SK-N-SH (cell line): ENCODE measurements at regions of chr1 and their contacts with region 1.

Region 1: DNA sequence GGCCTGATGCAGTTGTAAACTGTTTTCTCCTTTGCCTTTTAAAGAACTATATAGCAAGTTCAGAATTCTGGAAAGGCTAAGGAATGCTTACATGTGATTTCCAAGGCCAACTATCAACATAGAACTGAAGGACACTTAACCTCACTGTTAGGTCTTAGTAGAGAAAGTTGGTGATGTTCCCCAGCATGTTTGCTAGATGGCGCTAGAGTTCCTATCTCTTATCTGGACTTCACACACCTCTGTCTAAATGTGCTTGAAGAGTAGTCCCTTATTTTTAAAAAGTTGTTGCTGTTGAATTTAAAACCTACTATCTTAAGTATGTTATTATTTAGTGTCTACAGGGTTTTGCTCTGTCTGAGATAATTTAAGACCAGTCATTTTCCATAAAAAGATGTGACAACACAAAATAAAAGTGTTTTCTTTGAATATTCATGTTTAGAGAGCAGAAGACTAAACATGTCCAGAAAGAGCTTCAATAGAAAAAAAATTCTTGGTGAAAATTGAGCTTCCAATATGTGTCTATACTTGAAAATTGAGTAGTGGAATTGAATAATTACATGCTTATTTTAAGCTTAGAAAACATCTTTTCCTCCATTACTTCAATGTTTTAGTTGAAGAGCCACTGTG is 237.3 kb downstream of the S1PR1 start:
- DNase-seq: peak; percentile 8
- H3K4me3 ChIP-seq: no peak overlapping the region
- H3K27ac ChIP-seq: no peak overlapping the region
- H3K4me1 ChIP-seq: no peaks in the 10 kb centered on the region
- H3K27me3 ChIP-seq: no peaks in the 10 kb centered on the region
- CTCF ChIP-seq: peak; percentile 57
- EP300 ChIP-seq: no peak
- RAD21 ChIP-seq: peak; percentile 70

Region 2: DNA sequence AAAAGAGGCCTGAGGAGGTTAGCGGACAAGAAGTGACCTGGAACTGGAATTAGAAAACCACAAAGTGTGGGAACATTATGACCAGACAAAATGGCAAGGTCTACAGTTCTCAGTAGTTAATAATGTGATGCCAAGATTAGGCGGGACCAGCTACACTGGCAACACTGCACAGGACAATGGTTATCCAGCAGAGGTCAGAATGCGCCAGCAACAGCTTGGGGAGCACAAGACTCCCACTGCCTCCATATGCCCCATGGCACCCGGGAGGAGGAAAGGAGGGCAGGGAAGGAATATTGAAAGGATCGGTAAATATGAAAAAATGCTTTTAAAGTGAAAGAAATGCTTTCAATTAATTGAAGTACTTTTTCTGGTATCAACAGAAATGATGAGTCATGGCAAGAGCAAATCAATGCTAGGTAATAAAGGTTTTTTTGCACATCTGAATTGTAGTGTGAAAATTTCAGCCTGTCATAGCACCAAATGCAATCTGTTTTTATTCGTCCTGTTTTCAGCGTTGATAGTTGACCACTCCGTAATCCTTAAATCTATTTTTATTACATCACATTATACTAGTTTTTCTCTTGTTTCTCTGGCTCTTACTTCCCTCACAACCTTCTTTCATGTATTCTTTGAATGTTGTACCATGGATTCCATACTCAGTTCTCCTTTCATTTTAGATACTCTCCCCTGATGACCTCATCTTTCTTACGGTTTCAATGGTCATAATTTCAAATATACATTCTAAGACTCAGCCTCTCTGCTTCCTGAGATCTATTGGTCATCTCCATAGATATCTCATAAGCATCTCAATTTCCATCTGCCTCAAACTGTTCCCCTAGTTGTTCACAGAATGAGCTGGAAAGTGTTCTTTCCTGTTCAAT is 723.9 kb before region 1 on chr1:
- CTCF ChIA-PET with region 1: no interaction called
- POLR2A ChIA-PET with region 1: no interaction called
- DNase-seq: no peak
- H3K4me3 ChIP-seq: no peak overlapping the region
- H3K27ac ChIP-seq: no peak overlapping the region
- H3K4me1 ChIP-seq: no peaks in the 10 kb centered on the region
- H3K27me3 ChIP-seq: no peaks in the 10 kb centered on the region
- CTCF ChIP-seq: no peak
- EP300 ChIP-seq: no peak
- RAD21 ChIP-seq: no peak

Region 3: DNA sequence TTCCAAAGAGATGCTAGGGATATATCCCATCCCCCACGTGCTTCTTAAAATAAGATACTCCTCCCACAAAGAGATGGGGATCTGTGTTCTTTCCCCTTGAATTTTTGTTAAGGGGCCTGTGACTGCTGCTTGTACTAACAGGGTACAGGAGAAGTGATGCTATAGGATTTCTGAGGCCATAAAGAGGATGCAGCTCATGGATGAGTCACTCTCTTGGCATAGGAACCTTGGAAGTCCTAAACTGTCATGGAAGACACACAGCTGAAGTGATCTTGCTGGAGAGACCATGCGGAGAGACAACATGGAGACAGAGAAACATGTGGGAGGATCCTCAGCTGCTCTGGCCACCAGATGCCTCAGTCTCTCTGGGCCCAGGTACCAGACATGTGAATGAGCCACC is 80.1 kb before region 1 on chr1:
- CTCF ChIA-PET with region 1: no interaction called
- POLR2A ChIA-PET with region 1: no interaction called
- DNase-seq: no peak
- H3K4me3 ChIP-seq: no peak overlapping the region
- H3K27ac ChIP-seq: no peak overlapping the region
- H3K4me1 ChIP-seq: no peaks in the 10 kb centered on the region
- H3K27me3 ChIP-seq: no peaks in the 10 kb centered on the region
- CTCF ChIP-seq: no peak
- EP300 ChIP-seq: no peak
- RAD21 ChIP-seq: no peak

Region 4: GRCh38 chr1:101484689-101485338 is 10.7 kb after region 1 on chr1:
- CTCF ChIA-PET with region 1: interaction called, 63 read pairs
- POLR2A ChIA-PET with region 1: no interaction called
- DNase-seq: no peak
- H3K4me3 ChIP-seq: no peak overlapping the region
- H3K27ac ChIP-seq: peak overlapping the region; percentile 19 to 95; a peak in 3 of 4 replicates
- H3K4me1 ChIP-seq: peaks cover 0 to 24% of the 10 kb centered on the region in 2 experiments; a peak in 2 of 4 replicates
- H3K27me3 ChIP-seq: no peaks in the 10 kb centered on the region; the same call in 1 of the 2 replicates
- CTCF ChIP-seq: no peak
- EP300 ChIP-seq: no peak
- RAD21 ChIP-seq: no peak

Region 5: GRCh38 chr1:101520302-101520701 is 46.1 kb after region 1 on chr1:
- CTCF ChIA-PET with region 1: interaction called, 10 read pairs
- POLR2A ChIA-PET with region 1: no interaction called
- DNase-seq: peak; percentile 42
- H3K4me3 ChIP-seq: peak overlapping the region in 1 of 2 experiments; percentile 38; a peak in 1 of 4 replicates
- H3K27ac ChIP-seq: no peak overlapping the region
- H3K4me1 ChIP-seq: no peaks in the 10 kb centered on the region
- H3K27me3 ChIP-seq: no peaks in the 10 kb centered on the region
- CTCF ChIP-seq: peak; percentile 86
- EP300 ChIP-seq: no peak
- RAD21 ChIP-seq: peak; percentile 84